ENCODE measurements at regions of chr18 and their contacts with region 1.

Region 1: DNA sequence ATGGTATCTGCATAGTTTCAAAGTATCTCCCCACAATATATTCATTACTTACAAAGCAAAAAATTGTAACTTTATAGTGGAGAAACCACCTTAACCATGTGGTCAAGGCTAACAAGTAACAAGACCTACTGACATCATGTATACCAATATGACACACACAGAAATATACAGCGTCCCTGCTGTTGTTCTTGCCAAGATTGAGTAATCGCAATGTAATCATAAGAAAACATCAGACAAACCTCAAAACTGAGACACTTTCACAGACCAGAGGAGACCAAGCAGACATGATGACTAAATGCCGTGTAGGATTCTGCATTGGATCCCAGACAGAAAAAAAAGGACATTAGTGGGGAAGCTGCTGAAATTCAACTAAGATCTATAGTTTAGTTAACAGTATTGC is 123.0 kb downstream of the ACAA2 start:
- DNase-seq: peak; percentile 78
- H3K4me3 ChIP-seq: peak overlapping the region in 1 of 3 experiments; percentile 34
- H3K27ac ChIP-seq: peak overlapping the region; percentile 97
- H3K4me1 ChIP-seq: peaks cover 48% of the 10 kb centered on the region
- H3K27me3 ChIP-seq: no peaks in the 10 kb centered on the region
- CTCF ChIP-seq: no peak
- POLR2A ChIP-seq: no peak

Region 2: GRCh38 chr18:49645841-49646351 is 44.4 kb before region 1 on chr18:
- CTCF ChIA-PET with region 1: no interaction called
- POLR2A ChIA-PET with region 1: no interaction called
- dilution Hi-C with region 1: no loop called
- intact Hi-C with region 1: loop called (anchors 5 kb)
- DNase-seq: no peak
- H3K4me3 ChIP-seq: no peak overlapping the region
- H3K27ac ChIP-seq: no peak overlapping the region
- H3K4me1 ChIP-seq: peaks cover 10% of the 10 kb centered on the region
- H3K27me3 ChIP-seq: no peaks in the 10 kb centered on the region
- CTCF ChIP-seq: no peak
- POLR2A ChIP-seq: no peak

Region 3: GRCh38 chr18:50277935-50278334 is 587.6 kb after region 1 on chr18:
- CTCF ChIA-PET with region 1: no interaction called
- POLR2A ChIA-PET with region 1: no interaction called
- dilution Hi-C with region 1: no loop called
- intact Hi-C with region 1: no loop called
- DNase-seq: no peak
- H3K4me3 ChIP-seq: no peak overlapping the region
- H3K27ac ChIP-seq: no peak overlapping the region
- H3K4me1 ChIP-seq: peaks cover 23% of the 10 kb centered on the region
- H3K27me3 ChIP-seq: no peaks in the 10 kb centered on the region
- CTCF ChIP-seq: no peak
- POLR2A ChIP-seq: no peak